Aorta (tissue), 5 donors: ENCODE measurements at regions of chr17 and their contacts with region 1.

Region 1: GRCh38 chr17:68172461-68172954 is 75.3 kb upstream of the AMZ2 start:
- DNase-seq: peak; percentile 72 to 88
- ATAC-seq: peak; percentile 83
- H3K4me3 ChIP-seq: no peak overlapping the region
- H3K27ac ChIP-seq: no peak overlapping the region
- H3K4me1 ChIP-seq: no peaks in the 10 kb centered on the region
- H3K27me3 ChIP-seq: no peaks in the 10 kb centered on the region

Region 2: DNA sequence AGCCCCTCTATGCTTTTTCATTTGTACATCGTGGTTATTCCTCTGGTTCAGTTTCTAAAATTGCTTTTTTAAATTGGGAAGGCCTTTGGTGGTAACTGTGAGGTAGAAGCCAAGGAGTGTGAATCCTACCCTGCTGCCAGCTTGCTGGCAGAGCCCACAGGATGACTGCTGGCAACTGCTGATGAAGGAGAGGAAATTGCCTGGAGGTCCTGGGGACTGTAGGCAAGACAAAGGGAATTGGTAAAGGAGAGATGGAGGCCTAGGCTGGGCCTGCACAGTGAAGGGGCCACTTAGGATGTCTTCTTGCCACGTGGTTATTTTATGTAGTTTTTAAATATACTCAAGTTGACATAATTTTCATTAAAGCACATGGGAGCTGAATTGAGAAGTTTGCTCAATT is 192.1 kb before region 1 on chr17:
- intact Hi-C with region 1: no loop called
- DNase-seq: no peak
- ATAC-seq: no peak
- H3K4me3 ChIP-seq: no peak overlapping the region
- H3K27ac ChIP-seq: no peak overlapping the region
- H3K4me1 ChIP-seq: no peaks in the 10 kb centered on the region
- H3K27me3 ChIP-seq: no peaks in the 10 kb centered on the region

Region 3: GRCh38 chr17:68205251-68205807 is 32.8 kb after region 1 on chr17:
- intact Hi-C with region 1: loop called in 1 of 2 experiments (anchors 1 kb)
- DNase-seq: peak; percentile 96 to 98
- ATAC-seq: peak; percentile 96
- H3K4me3 ChIP-seq: peak overlapping the region; percentile 72 to 84
- H3K27ac ChIP-seq: no peak overlapping the region
- H3K4me1 ChIP-seq: peaks cover 0 to 2% of the 10 kb centered on the region in 2 donors
- H3K27me3 ChIP-seq: no peaks in the 10 kb centered on the region

Region 4: DNA sequence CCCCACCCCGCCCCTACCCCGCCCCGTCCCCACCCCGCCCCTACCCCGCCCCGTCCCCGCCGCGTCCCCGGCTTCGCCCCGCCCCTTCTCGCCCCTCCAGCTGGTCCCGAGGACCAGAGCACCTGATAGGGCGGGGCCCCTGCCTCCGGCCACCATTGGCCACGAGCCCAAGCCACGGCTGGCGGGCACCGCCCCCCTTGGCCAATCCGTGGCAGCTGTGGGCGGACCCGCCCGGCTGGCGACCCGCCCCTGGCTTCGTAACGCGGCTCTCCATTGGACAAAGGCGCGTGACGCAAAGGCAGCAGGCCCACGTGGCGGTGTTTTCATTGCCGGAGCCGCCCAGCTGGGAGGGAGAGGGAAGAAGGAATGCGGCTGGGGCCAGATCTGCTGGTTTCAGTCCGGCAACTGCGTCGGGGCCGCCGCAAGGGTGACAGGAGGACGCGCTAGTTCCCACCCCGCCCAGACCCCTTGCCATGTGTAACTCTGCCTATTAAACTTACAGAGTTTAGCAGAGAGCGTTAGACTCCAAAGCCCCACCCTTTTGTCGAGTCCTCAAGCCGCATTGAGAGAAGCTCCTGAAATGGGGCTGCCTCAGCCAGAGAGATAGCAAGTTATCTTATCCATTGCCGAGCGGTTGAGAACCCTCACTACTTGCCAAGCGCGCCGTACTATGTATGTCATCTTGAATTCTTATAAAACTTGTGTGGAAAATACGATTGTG is 285.2 kb after region 1 on chr17:
- intact Hi-C with region 1: loop called in 1 of 2 experiments (anchors 10 kb)
- DNase-seq: peak; percentile 99
- ATAC-seq: peak; percentile 98
- H3K4me3 ChIP-seq: peak overlapping the region; percentile 41 to 44
- H3K27ac ChIP-seq: peak overlapping the region in 1 of 2 donors; percentile 62
- H3K4me1 ChIP-seq: peaks cover 0 to 2% of the 10 kb centered on the region in 2 donors
- H3K27me3 ChIP-seq: no peaks in the 10 kb centered on the region

Region 5: DNA sequence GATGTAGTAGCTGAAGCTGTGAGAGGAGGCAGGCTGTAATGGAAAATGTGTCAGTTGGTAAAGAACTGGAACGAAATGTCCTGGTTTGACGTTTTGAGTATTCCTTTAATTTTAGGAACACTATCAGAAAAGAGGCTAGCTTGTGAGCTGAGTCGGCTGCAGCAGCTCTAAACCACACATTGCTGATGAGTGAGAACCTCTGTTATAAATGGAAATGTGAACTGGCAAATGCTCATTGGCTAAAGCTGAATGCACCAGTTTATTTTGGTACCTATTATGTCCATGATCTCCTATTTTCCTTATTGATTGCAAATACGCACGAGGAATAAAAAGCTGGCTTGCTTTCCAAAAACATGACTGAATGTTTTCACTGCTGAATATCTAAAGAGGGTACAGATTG is 295.8 kb after region 1 on chr17:
- intact Hi-C with region 1: loop called (anchors 5 to 10 kb)
- DNase-seq: no peak
- ATAC-seq: no peak
- H3K4me3 ChIP-seq: no peak overlapping the region
- H3K27ac ChIP-seq: peak overlapping the region in 1 of 2 donors; percentile 50
- H3K4me1 ChIP-seq: no peaks in the 10 kb centered on the region
- H3K27me3 ChIP-seq: no peaks in the 10 kb centered on the region